Activated CD4-positive, alpha-beta memory T cell treated with anti-CD3 and anti-CD28 coated beads for 36 hours (primary cell): ENCODE measurements at regions of chr22 and their contacts with region 1.

Region 1: DNA sequence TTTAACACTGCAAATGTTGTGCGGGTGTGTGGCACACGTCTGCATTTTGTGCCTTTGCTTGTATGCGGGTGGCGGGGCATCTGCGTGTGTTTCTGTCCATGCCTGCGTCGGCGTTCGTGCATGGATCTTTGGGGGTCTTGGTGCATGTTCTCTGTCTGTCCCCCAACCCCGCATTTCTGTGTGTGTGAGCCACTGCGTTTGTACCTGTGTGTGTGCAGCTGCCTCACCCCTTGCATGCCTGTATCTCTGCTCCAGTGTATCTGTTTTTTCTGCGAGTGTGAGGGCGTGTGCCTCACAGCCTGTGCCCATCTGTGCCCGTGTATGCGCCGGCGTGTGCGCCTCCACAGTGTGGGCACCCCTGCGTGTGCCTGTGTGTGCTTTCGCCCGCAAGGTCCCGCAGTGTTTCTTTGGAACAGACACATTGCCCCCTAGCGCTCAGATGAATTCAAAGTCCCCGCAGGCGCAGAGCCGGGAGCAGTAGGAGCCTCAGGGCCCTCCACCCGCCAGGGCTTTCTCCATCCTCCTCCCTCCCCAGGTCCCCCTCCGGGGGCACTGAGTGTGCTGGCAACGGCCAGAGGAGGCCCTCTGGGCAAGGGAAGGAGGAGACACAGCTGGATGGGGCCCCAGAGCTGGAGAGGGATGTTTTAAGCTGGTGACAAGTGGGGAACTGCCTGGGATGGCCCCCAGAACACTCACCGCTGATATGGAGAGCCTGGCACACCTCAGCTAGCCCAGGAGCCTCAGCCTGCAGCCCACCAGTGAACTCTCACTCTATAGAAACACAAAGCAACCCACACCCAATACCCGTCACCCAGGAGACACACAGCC is 3.1 kb upstream of the MN1 start:
- DNase-seq: peak; percentile 68
- H3K4me3 Mint-ChIP-seq: no peak overlapping the region
- H3K27ac Mint-ChIP-seq: no peak overlapping the region
- H3K4me1 Mint-ChIP-seq: peaks cover 10% of the 10 kb centered on the region
- H3K27me3 Mint-ChIP-seq: peaks cover 19% of the 10 kb centered on the region

Region 2: DNA sequence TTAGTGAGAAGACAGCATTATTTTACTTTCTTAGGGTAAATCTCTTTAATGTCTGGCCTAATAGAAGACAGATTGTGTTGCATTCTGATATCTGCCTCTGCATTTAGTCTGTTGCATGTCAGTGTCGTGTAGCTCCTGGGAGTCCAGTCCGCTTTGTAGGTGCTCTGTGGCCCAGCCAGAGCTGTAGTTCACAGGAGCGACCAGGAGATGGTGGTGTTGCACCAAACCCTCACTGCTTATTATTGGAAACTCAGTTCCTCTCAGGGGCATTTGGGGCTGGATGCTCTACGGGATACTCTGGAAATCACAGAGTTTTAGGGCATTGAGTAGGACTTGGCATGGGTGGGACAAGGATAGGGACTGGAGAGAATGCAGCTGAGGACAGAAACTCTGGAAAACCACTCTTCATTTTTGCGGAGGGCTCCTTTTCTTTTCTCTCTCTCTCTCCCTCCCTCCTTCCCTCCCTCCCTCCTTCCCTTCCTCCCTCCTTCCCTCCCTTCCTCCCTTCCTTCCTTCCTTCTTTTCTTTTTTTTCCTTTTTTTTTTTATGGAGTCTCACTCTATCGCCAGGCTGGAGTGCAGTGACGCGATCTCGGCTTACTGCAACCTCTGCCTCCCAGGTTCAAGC is 1125.6 kb before region 1 on chr22:
- CTCF ChIA-PET with region 1: no interaction called
- POLR2A ChIA-PET with region 1: no interaction called
- intact Hi-C with region 1: loop called (anchors 5 kb)
- DNase-seq: peak; percentile 87
- H3K4me3 Mint-ChIP-seq: no peak overlapping the region
- H3K27ac Mint-ChIP-seq: no peak overlapping the region
- H3K4me1 Mint-ChIP-seq: peaks cover 42% of the 10 kb centered on the region
- H3K27me3 Mint-ChIP-seq: no peaks in the 10 kb centered on the region

Region 3: GRCh38 chr22:26835929-26836528 is 968.7 kb before region 1 on chr22:
- CTCF ChIA-PET with region 1: no interaction called
- POLR2A ChIA-PET with region 1: no interaction called
- intact Hi-C with region 1: loop called (anchors 10 kb)
- DNase-seq: peak; percentile 70
- H3K4me3 Mint-ChIP-seq: no peak overlapping the region
- H3K27ac Mint-ChIP-seq: no peak overlapping the region
- H3K4me1 Mint-ChIP-seq: no peaks in the 10 kb centered on the region
- H3K27me3 Mint-ChIP-seq: no peaks in the 10 kb centered on the region

Region 4: DNA sequence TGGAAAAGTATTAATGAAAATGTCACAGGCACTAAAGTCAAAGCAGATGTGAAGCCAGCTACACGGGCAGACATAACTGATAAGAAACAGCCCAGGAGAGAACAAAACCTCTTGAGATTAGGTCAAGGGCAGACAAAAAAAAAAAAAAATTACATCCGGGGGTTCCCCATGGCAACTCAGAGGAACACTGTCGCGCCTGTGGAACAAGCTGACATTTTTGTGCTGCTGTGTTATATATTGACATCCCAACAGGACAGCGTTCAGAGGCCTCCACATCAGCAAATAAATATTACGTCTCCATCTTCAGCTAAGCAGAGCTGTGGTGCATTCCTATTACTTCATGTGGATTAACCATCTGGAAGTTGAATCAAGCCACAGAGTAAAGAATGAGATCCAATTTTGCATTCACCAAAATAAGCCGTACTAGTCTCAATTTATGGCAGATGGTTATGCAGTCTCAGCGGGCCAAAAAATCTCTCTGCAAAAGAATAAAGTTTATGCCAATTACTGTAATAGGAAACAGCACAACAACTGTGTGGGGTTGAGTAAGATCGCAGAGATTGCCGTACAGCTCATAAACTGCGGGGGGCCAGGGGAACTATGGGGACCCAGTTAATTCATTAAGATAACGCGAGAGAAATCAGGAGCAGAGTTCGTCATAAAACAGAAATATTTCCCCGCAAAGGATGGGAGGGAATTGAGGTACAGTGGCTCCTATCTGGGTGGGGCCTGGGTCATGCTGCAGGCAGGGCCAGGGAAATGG is 38.2 kb after region 1 on chr22:
- CTCF ChIA-PET with region 1: no interaction called
- POLR2A ChIA-PET with region 1: no interaction called
- intact Hi-C with region 1: no loop called
- DNase-seq: no peak
- H3K4me3 Mint-ChIP-seq: no peak overlapping the region
- H3K27ac Mint-ChIP-seq: no peak overlapping the region
- H3K4me1 Mint-ChIP-seq: no peaks in the 10 kb centered on the region
- H3K27me3 Mint-ChIP-seq: no peaks in the 10 kb centered on the region

Region 5: DNA sequence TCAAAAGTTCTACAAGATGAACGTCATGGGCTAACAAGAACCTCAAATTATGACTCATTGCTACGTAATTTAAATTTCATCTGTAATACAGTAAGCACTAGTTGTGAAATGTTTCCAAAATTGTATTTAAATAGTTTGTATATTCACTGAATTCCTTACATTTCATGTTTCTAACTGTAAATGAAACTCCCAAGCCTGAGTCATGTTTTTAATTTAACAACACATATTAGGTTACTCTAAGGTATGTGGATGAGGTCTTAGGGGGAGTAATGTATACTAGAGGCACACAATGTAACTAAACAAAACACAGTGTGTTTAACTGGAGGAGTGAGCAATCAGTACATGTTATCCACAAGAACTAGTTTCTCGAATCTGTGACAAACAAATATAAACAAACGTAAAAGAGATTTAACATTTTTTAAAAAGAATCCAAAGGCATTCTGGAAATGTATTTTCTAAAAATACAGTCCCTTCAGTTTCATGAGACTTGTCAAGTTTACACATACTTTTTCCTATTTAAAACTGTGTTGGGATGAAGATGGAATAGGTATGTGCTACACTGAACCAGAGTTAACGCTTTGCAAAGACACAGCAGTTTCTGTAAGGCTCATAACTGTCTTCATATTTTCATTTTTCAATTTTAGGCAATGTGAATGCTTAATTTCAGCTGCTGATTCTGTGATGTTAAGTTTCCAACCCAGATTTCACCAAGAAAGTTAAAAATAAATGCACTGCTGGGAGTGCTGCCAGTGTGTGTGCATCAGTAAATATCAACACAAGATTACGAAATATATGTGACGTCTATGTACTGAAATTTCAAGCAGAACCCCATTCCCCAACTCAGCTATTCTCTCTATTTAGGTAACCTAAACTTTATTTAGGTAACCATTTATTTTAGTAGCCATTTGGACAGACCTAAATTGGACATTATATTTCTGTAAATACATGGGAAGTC is 61.7 kb after region 1 on chr22:
- CTCF ChIA-PET with region 1: no interaction called
- POLR2A ChIA-PET with region 1: no interaction called
- intact Hi-C with region 1: no loop called
- DNase-seq: no peak
- H3K4me3 Mint-ChIP-seq: no peak overlapping the region
- H3K27ac Mint-ChIP-seq: no peak overlapping the region
- H3K4me1 Mint-ChIP-seq: peaks cover 44% of the 10 kb centered on the region
- H3K27me3 Mint-ChIP-seq: no peaks in the 10 kb centered on the region

Region 6: DNA sequence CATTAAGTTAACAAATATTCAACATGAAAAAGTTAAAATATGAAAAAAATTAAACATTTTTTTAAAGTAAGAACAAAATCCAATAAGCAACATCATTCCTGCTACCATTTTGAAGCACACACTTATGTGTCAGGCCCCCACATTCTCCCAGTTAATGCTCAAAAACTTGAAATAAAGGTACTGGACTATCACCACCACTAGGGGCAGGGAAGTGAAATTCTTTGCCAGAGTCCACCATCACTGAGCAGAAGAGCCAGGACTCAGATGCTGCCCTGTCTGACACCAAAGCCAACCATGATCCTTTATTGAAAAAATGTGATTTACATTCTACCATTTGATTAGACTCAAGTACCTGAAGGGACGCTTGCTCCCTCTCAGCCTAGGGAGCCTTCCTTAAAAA is 75.2 kb after region 1 on chr22:
- CTCF ChIA-PET with region 1: no interaction called
- POLR2A ChIA-PET with region 1: no interaction called
- intact Hi-C with region 1: no loop called
- DNase-seq: no peak
- H3K4me3 Mint-ChIP-seq: no peak overlapping the region
- H3K27ac Mint-ChIP-seq: no peak overlapping the region
- H3K4me1 Mint-ChIP-seq: peaks cover 37% of the 10 kb centered on the region
- H3K27me3 Mint-ChIP-seq: no peaks in the 10 kb centered on the region

Region 7: DNA sequence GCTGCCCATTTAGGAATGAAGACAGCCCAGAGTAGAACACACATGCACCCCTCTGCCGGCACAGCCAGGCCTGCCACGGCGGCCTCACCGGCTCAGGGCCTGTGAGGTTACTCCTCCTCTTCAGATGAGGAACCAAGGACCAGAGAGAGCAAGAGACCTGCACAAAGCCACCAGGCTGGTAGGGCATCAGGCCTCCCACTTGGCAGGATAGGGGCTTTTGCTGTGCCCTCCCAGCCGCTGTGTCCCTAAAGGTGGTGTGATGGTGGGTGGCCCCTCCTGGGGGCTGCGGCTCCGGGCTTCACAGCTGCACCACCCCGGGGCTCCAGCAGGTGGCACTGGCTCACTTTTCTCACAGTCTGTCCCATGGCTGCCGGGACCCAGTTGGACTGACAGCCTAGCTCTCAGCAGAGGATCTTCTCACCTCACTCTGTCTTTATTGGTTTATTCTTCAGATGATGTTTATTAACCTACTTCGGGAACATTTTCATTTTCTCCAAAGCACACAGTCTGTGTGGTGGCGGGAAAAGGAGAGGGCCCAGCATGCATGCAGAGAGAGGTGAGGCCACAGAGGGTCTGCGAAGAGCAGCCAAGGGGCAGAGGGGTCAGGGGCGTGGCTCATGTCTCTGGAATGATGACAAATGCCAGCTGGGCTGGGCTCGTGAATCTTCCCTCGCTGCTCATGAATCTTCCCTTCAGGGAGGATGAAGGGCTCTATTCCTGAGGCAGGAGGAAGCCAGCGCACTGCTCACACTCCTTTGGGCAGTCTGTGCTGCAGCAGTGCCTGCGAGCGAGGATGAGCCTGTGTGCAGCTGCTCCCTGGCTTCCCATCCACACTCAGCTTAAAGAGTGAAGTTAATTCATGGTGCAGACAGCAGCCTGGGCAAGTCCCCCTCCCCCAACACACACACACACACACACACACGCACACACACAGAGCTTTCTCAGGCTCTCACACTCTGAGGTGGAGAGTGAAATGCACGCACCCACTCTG is 215.5 kb after region 1 on chr22:
- CTCF ChIA-PET with region 1: no interaction called
- POLR2A ChIA-PET with region 1: no interaction called
- intact Hi-C with region 1: no loop called
- DNase-seq: peak; percentile 71
- H3K4me3 Mint-ChIP-seq: no peak overlapping the region
- H3K27ac Mint-ChIP-seq: no peak overlapping the region
- H3K4me1 Mint-ChIP-seq: no peaks in the 10 kb centered on the region
- H3K27me3 Mint-ChIP-seq: peaks cover 2% of the 10 kb centered on the region